ENCODE measurements at regions of chr6 and their contacts with region 1.

Region 1: DNA sequence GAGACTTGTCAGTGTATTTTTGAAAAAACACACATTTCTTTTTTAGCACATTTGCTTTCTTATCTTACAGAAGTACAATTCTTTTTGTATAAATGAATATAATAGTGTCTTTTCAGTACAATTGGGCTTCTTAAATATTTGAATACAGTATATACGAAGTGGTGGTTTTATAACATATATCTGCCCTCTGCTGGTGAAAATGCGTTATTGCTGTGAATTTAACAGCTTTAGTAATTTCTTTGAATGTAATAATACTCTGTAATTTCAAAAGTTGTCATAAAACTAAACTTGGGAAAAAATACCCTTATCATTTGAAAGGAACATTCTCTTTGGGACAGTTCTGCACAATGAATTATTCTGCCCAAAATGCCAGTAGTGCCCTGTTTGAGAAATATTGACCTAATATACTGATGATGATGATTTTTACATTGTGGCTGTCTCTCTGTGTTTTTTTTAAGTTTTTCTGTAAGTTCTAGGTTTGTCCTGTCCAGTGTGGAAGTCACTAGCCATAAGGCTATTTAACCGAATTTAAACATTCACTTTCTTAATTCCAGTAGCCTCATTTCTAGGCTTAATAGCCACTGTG is 19.0 kb downstream of the SMAP1 start:
- DNase-seq: no peak
- H3K4me3 Mint-ChIP-seq: no peak overlapping the region
- H3K27ac Mint-ChIP-seq: no peak overlapping the region
- H3K4me1 Mint-ChIP-seq: peaks cover 44% of the 10 kb centered on the region
- H3K27me3 Mint-ChIP-seq: no peaks in the 10 kb centered on the region

Region 2: GRCh38 chr6:70221025-70221714 is 465.5 kb before region 1 on chr6:
- CTCF ChIA-PET with region 1: no interaction called
- intact Hi-C with region 1: loop called (anchors 1 kb)
- DNase-seq: no peak
- H3K4me3 Mint-ChIP-seq: no peak overlapping the region
- H3K27ac Mint-ChIP-seq: no peak overlapping the region
- H3K4me1 Mint-ChIP-seq: no peaks in the 10 kb centered on the region
- H3K27me3 Mint-ChIP-seq: peaks cover 13% of the 10 kb centered on the region

Region 3: DNA sequence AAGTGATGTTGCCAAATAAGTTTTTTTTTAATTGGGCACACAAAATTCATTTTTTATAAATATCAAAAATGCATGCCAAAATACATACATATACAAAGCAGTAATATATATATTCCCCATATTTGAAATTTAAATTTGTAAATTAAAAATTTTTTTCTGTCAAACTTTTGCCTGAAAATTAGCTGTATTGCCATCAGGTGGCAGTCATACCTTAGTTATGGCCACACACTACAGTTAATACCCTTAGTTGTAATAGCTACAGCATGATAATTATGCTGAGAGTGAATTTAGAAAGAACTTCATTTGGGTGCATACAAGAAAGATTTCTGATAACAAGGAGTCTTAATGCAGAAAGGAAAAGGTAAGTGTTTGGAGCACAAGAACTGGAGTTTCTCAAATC is 166.1 kb before region 1 on chr6:
- CTCF ChIA-PET with region 1: interaction called, 24 read pairs
- intact Hi-C with region 1: loop called (anchors 1 kb)
- DNase-seq: peak; percentile 24
- H3K4me3 Mint-ChIP-seq: no peak overlapping the region
- H3K27ac Mint-ChIP-seq: no peak overlapping the region
- H3K4me1 Mint-ChIP-seq: peaks cover 7% of the 10 kb centered on the region
- H3K27me3 Mint-ChIP-seq: no peaks in the 10 kb centered on the region

Region 4: GRCh38 chr6:70566751-70567382 is 119.8 kb before region 1 on chr6 and contains the start of gene SDHAF4:
- CTCF ChIA-PET with region 1: interaction called, 4 read pairs
- intact Hi-C with region 1: loop called (anchors 1 kb)
- DNase-seq: peak; percentile 95
- H3K4me3 Mint-ChIP-seq: peak within 1 kb of the TSS; percentile 83
- H3K27ac Mint-ChIP-seq: peak within 1 kb of the TSS; percentile 83
- H3K4me1 Mint-ChIP-seq: peaks cover 11% of the 10 kb centered on the region
- H3K27me3 Mint-ChIP-seq: no peaks in the 10 kb centered on the region
- total RNA-seq, gene SDHAF4: 16.8 to 17.9 TPM

Region 5: DNA sequence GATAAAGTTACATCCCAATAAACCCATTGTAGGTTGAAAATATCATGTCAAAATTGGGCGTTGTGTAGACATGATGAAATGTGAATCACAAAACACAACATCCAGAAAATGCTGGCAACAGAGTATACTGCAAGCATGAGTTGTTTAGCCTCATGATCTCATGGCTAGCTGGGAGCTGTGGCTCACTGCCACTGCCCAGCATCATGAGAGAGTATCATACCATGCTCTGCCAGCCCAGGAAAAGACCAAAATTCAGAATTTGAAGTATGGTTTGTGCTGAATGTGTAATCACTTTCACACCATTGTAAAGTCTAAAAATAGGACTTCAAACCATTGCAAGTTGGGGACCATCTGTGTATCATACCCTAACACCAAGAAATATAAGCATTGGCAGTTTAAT is 64.2 kb before region 1 on chr6:
- CTCF ChIA-PET with region 1: no interaction called
- intact Hi-C with region 1: no loop called
- DNase-seq: no peak
- H3K4me3 Mint-ChIP-seq: no peak overlapping the region
- H3K27ac Mint-ChIP-seq: no peak overlapping the region
- H3K4me1 Mint-ChIP-seq: no peaks in the 10 kb centered on the region
- H3K27me3 Mint-ChIP-seq: no peaks in the 10 kb centered on the region

Region 6: DNA sequence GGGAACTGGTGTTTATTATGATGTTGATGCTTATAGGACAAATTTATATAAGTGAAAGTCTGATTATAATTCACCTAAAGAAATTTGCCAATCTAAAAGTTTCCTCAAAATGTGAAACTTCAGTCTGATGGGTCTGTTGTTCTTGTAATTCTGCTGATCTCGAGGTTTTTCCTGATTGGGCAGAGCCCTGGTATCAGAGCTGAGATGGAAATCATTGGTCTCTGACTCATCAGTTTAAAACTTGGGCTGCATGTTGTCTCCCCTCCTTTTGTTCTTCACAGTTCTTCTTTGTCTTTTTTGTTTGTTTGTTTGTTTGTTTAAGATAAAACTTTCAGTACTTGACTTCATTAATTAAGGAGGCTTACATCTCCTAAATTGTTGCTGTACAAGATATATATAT is 13.0 kb before region 1 on chr6:
- CTCF ChIA-PET with region 1: interaction called, 13 read pairs
- intact Hi-C with region 1: loop called (anchors 1 kb)
- DNase-seq: no peak
- H3K4me3 Mint-ChIP-seq: no peak overlapping the region
- H3K27ac Mint-ChIP-seq: no peak overlapping the region
- H3K4me1 Mint-ChIP-seq: peaks cover 62% of the 10 kb centered on the region
- H3K27me3 Mint-ChIP-seq: no peaks in the 10 kb centered on the region

Region 7: DNA sequence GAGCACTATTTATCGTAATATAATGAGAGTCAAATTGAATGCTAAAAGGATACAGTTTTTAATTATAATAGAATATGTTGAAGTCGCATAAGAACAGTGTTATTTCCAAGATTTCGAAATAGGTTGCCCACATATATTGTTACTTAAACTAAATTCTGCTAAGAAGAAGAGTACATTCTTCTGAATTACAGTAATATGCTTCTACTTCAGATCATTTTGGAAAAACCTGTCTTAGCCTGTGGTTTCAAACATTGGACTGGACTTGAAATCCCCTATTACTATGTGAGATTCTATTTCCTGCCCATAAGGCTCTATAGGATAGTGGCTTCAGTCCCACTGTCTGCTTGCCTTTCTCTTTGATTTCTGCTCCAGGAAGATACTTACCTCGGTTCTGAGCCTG is 133.0 kb after region 1 on chr6:
- CTCF ChIA-PET with region 1: no interaction called
- intact Hi-C with region 1: no loop called
- DNase-seq: no peak
- H3K4me3 Mint-ChIP-seq: no peak overlapping the region
- H3K27ac Mint-ChIP-seq: no peak overlapping the region
- H3K4me1 Mint-ChIP-seq: no peaks in the 10 kb centered on the region
- H3K27me3 Mint-ChIP-seq: no peaks in the 10 kb centered on the region

Measured in activated naive CD4-positive, alpha-beta T cell treated with anti-CD3 and anti-CD28 coated beads for 36 hours (primary cell).